HepG2 (cell line): ENCODE measurements at regions of chr3 and their contacts with region 1.

Region 1: GRCh38 chr3:67113802-67114407 is 115.8 kb downstream of the KBTBD8 start:
- DNase-seq: peak; percentile 75
- ATAC-seq: peak; percentile 96
- H3K4me3 ChIP-seq: no peak overlapping the region
- H3K27ac ChIP-seq: no peak overlapping the region
- H3K4me1 ChIP-seq: no peaks in the 10 kb centered on the region
- H3K27me3 ChIP-seq: no peaks in the 10 kb centered on the region
- CTCF ChIP-seq: peak; percentile 96
- EP300 ChIP-seq: peak in 1 of 2 experiments; percentile 23; a peak in 1 of 4 replicates
- POLR2A ChIP-seq: no peak
- RAD21 ChIP-seq: peak; percentile 85

Region 2: DNA sequence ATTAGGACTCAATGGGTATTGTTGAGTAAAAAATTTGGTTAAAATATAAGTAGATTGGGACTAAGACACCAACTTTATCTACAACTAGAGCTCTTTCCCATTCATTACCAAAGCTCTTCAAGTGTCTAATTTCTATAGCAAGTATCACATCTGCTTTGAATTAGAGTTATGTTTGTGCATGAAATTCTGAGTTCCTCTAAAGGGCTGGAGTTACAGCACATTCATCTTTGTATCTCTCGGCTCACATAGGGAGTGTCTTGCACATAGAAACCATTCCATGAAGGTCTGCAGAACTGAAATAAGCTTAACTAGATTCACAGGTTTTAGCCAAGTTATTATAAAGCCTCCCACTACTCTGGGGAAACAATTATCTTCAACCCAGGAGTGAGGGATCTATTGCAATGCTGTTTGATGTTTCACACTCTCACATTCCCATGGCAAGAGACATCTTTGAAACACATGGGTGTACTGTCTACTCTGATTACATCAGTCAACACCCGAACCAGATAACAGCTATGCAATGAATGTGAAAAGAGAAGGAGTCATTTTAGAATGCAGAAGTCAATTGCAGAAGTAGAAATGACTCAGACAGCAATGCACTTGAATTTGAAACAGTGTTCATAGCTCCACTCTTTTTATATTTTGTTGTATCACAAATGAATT is 208.9 kb before region 1 on chr3:
- CTCF ChIA-PET with region 1: no interaction called
- POLR2A ChIA-PET with region 1: no interaction called
- in situ Hi-C with region 1: no loop called
- intact Hi-C with region 1: no loop called
- DNase-seq: peak; percentile 12
- ATAC-seq: no peak
- H3K4me3 ChIP-seq: no peak overlapping the region
- H3K27ac ChIP-seq: no peak overlapping the region
- H3K4me1 ChIP-seq: no peaks in the 10 kb centered on the region
- H3K27me3 ChIP-seq: 0 out of 5 replicates have a peak, but pooled peaks cover 0 to 6% of the 10 kb centered on the region in 2 experiments
- CTCF ChIP-seq: no peak
- EP300 ChIP-seq: no peak
- POLR2A ChIP-seq: no peak
- RAD21 ChIP-seq: no peak

Region 3: GRCh38 chr3:66971891-66972551 is 141.9 kb before region 1 on chr3:
- CTCF ChIA-PET with region 1: no interaction called
- POLR2A ChIA-PET with region 1: no interaction called
- in situ Hi-C with region 1: no loop called
- intact Hi-C with region 1: loop called (anchors 10 kb)
- DNase-seq: peak; percentile 60
- ATAC-seq: peak; percentile 100
- H3K4me3 ChIP-seq: peak overlapping the region; percentile 26 to 64 (median 27); a peak in 3 of 6 replicates
- H3K27ac ChIP-seq: no peak overlapping the region
- H3K4me1 ChIP-seq: peaks cover 8% of the 10 kb centered on the region; the same call in 1 of the 2 replicates
- H3K27me3 ChIP-seq: peaks cover 0 to 12% of the 10 kb centered on the region in 2 experiments; a peak in 3 of 5 replicates
- CTCF ChIP-seq: peak; percentile 87
- EP300 ChIP-seq: no peak
- POLR2A ChIP-seq: no peak
- RAD21 ChIP-seq: peak; percentile 57; the same call in 1 of the 2 replicates

Region 4: DNA sequence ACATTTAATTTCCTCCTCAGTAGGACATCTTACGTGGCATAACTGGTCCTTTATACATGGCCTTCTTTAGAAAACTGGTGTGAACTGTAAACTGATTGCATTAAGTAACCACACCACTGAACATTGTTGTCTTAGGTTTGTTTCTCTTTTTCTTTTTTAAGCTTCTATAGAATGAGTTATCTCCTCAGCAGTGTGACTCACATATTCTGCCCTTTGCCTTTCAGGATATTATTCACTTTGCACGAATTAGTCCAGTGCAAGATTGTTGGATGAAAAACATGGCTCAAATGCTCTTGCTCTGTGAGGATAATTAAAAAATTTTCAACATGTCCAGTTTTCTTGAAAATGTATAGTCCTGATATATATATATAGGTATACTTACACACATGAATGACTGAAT is 31.8 kb after region 1 on chr3:
- CTCF ChIA-PET with region 1: no interaction called
- POLR2A ChIA-PET with region 1: no interaction called
- in situ Hi-C with region 1: no loop called
- intact Hi-C with region 1: no loop called
- DNase-seq: no peak
- ATAC-seq: no peak
- H3K4me3 ChIP-seq: no peak overlapping the region
- H3K27ac ChIP-seq: no peak overlapping the region
- H3K4me1 ChIP-seq: no peaks in the 10 kb centered on the region
- H3K27me3 ChIP-seq: no peaks in the 10 kb centered on the region; a peak in 1 of 5 replicates
- CTCF ChIP-seq: no peak
- EP300 ChIP-seq: no peak
- POLR2A ChIP-seq: no peak
- RAD21 ChIP-seq: no peak

Region 5: DNA sequence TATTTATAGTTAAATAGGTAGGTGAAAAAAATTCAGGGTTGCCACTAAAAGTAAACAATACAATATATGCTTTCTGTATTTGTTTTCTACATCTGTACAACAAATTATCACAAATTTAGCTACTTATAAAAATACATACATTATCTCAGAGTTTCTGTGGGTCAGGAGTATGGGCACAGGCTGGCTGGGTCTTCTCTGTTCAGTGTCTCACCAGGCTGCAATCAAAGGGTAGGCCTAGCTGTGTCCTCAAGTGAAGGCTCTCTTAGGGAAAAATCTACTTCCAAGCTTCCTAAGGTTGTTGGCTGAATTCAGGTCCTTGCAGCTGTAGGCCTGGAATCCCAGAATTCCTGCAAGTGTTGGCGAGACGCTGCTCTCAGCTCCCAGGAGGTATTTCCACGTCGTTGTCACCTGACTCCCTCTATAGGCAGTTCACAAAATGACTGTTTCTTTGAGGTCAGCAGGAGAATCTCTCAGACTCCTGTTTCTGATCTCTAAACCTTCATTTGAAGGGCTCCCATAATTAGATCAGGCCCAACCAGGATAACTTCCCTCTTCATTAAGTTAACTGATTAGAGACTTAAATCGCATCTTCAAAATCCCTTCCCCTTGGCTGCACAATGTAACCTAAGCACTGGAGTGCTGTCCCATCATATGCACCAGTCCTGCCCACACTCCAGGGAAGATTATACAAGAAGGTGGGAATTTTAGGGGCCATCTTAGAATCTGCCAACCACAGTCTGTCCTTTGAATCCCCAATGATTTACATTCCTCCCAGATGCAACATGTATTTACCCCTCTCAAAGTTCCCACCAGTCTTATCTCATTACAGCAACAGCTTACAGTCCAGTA is 243.9 kb after region 1 on chr3:
- CTCF ChIA-PET with region 1: interaction called, 38 read pairs
- POLR2A ChIA-PET with region 1: interaction called, 3 read pairs
- in situ Hi-C with region 1: loop called (anchors 5 kb)
- intact Hi-C with region 1: loop called (anchors 1 kb)
- DNase-seq: peak; percentile 68
- ATAC-seq: peak; percentile 97
- H3K4me3 ChIP-seq: no peak overlapping the region
- H3K27ac ChIP-seq: no peak overlapping the region
- H3K4me1 ChIP-seq: no peaks in the 10 kb centered on the region
- H3K27me3 ChIP-seq: no peaks in the 10 kb centered on the region
- CTCF ChIP-seq: peak; percentile 86
- EP300 ChIP-seq: peak in 1 of 2 experiments; percentile 44; a peak in 1 of 4 replicates
- POLR2A ChIP-seq: no peak
- RAD21 ChIP-seq: peak; percentile 89

Region 6: DNA sequence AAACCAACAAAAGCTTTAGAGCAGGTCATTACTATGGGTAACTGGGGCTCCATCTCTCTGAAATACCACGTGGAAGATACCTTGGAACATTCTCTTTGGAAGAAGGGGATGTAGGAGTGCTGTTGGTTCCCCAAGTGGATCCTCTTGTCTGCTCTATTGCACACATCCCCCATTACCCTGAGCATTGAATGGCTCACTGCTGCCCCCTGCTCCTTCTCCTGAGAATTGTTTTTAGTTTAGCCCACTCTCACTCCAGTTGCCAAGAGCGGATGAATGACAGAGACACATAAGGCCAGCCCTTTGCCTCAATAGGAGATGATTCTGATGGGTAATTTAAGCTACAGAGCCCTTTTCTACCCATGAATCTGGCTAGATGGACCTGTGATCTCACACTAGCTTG is 676.1 kb after region 1 on chr3:
- CTCF ChIA-PET with region 1: interaction called, 4 read pairs
- POLR2A ChIA-PET with region 1: no interaction called
- in situ Hi-C with region 1: loop called (anchors 25 kb)
- intact Hi-C with region 1: loop called (anchors 1 kb)
- DNase-seq: peak; percentile 52
- ATAC-seq: peak; percentile 97
- H3K4me3 ChIP-seq: no peak overlapping the region
- H3K27ac ChIP-seq: no peak overlapping the region
- H3K4me1 ChIP-seq: no peaks in the 10 kb centered on the region
- H3K27me3 ChIP-seq: no peaks in the 10 kb centered on the region
- CTCF ChIP-seq: peak; percentile 85
- EP300 ChIP-seq: no peak
- POLR2A ChIP-seq: no peak
- RAD21 ChIP-seq: peak; percentile 63

Region 7: GRCh38 chr3:67863869-67864268 is 750.0 kb after region 1 on chr3:
- CTCF ChIA-PET with region 1: no interaction called
- POLR2A ChIA-PET with region 1: no interaction called
- in situ Hi-C with region 1: loop called (anchors 25 kb)
- intact Hi-C with region 1: no loop called
- DNase-seq: peak; percentile 32
- ATAC-seq: peak; percentile 84
- H3K4me3 ChIP-seq: no peak overlapping the region
- H3K27ac ChIP-seq: no peak overlapping the region
- H3K4me1 ChIP-seq: no peaks in the 10 kb centered on the region
- H3K27me3 ChIP-seq: no peaks in the 10 kb centered on the region; a peak in 1 of 5 replicates
- CTCF ChIP-seq: peak; percentile 59
- EP300 ChIP-seq: no peak
- POLR2A ChIP-seq: no peak
- RAD21 ChIP-seq: no peak

Region 8: DNA sequence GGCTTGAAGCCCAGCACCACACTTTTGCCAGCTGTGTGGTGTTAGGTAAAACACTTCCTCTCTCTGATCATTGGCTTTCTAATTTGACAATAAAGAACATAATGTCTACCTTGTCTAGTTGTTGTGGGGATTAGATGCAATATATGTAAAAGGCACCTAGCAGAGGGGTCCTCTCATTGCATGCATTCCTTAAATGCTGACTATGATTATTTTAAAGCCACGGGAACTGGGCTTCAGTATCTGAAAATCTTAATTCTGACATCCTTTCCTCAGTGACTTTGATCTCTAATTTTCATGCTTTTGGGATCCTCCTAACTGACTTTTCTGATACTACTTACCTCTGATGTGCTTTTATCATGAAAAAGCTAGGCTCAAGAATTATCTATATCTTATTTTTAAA is 1222.1 kb after region 1 on chr3:
- CTCF ChIA-PET with region 1: no interaction called
- POLR2A ChIA-PET with region 1: no interaction called
- in situ Hi-C with region 1: no loop called
- intact Hi-C with region 1: loop called (anchors 5 kb)
- DNase-seq: no peak
- ATAC-seq: no peak
- H3K4me3 ChIP-seq: no peak overlapping the region
- H3K27ac ChIP-seq: no peak overlapping the region
- H3K4me1 ChIP-seq: no peaks in the 10 kb centered on the region
- H3K27me3 ChIP-seq: no peaks in the 10 kb centered on the region
- CTCF ChIP-seq: no peak
- EP300 ChIP-seq: no peak
- POLR2A ChIP-seq: no peak
- RAD21 ChIP-seq: no peak

Region 9: DNA sequence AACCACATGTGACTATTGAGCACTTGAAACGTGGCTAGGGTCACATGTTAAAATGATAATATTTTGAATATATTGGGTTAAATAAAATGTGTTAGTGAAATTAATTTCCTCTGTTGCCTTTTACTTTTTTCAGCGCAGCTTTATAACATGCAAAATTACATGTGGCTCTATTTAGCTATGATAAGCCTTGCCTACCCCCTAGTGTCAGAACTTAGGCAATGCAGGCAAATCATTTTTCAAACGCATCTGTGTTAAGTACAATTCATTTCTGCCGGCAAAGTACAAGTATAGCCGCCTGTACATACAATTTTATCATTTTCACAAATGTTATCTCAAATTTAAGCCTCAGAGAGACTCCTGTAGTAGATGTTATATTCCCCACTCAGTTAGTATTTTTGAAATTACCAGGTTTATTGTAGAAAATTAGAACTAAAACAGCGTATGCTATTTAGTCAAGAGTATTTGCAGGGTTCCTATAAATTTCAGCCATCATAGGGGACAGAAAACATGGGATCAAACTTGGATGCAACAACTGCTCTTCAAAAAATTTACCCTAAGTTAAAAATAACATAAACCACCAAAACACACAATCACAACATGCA is 1762.3 kb after region 1 on chr3:
- CTCF ChIA-PET with region 1: no interaction called
- POLR2A ChIA-PET with region 1: no interaction called
- in situ Hi-C with region 1: loop called (anchors 25 kb)
- intact Hi-C with region 1: loop called (anchors 5 kb)
- DNase-seq: peak; percentile 31
- ATAC-seq: peak; percentile 76
- H3K4me3 ChIP-seq: no peak overlapping the region
- H3K27ac ChIP-seq: no peak overlapping the region
- H3K4me1 ChIP-seq: no peaks in the 10 kb centered on the region
- H3K27me3 ChIP-seq: peaks cover 0 to 3% of the 10 kb centered on the region in 2 experiments; a peak in 1 of 5 replicates
- CTCF ChIP-seq: peak; percentile 80
- EP300 ChIP-seq: no peak
- POLR2A ChIP-seq: no peak
- RAD21 ChIP-seq: 0 out of 2 replicates have a peak, but pooled peaks have one; percentile 50